BJ (cell line): ENCODE measurements at regions of chr18 and their contacts with region 1.

Region 1: GRCh38 chr18:34122724-34123334 is 101.9 kb downstream of the NOL4 start:
- DNase-seq: no peak
- H3K4me3 ChIP-seq: no peak overlapping the region
- H3K27me3 ChIP-seq: no peaks in the 10 kb centered on the region
- CTCF ChIP-seq: peak; percentile 87

Region 2: GRCh38 chr18:33812186-33812585 is 310.6 kb before region 1 on chr18:
- CTCF ChIA-PET with region 1: no interaction called
- POLR2A ChIA-PET with region 1: no interaction called
- DNase-seq: no peak
- H3K4me3 ChIP-seq: no peak overlapping the region
- H3K27me3 ChIP-seq: no peaks in the 10 kb centered on the region
- CTCF ChIP-seq: no peak

Region 3: DNA sequence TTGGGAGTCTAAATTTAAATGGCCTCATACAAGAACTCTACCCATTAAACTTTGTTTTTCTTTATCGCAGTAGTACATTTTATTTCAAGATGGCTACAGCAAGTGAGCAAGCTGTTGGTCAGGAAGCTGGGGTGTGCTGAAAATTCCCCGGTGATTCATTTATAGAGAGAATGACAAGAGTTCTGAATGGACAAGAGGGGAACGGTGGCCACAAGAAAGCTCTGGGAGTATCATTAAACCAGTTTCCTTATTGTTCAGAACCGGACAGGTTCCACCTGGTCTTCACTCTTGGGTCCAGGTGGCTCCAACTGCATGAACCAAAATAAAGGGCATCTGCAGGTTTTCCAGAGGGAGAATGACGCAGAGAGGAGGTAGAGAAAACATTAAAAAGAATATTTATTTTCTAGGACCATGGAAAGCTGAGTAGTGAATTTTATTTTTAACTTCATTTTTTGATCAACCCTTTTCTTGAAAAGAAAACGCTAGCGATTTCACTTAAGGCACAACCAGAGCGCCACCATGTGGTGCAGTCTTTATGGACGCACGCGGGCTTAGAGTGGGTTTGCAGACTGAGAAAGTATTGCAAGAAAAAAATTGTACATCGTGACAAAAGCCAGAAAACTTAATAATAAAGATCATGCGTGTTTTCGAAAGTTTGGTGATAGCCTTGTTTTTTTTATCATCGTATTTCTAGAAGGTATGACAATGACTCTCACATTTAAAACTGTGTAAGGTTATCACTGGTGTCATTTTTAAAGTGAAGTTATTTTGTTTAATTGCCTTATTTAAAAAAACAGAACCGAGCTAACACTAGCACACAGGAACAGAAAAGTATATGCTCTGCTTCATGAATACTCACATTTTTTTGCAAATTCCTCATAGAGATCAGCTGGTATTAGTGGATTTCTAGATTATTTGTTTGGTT is 199.8 kb after region 1 on chr18:
- CTCF ChIA-PET with region 1: interaction called, 10 read pairs
- POLR2A ChIA-PET with region 1: no interaction called
- DNase-seq: no peak
- H3K4me3 ChIP-seq: no peak overlapping the region
- H3K27me3 ChIP-seq: no peaks in the 10 kb centered on the region
- CTCF ChIP-seq: peak; percentile 38

Region 4: DNA sequence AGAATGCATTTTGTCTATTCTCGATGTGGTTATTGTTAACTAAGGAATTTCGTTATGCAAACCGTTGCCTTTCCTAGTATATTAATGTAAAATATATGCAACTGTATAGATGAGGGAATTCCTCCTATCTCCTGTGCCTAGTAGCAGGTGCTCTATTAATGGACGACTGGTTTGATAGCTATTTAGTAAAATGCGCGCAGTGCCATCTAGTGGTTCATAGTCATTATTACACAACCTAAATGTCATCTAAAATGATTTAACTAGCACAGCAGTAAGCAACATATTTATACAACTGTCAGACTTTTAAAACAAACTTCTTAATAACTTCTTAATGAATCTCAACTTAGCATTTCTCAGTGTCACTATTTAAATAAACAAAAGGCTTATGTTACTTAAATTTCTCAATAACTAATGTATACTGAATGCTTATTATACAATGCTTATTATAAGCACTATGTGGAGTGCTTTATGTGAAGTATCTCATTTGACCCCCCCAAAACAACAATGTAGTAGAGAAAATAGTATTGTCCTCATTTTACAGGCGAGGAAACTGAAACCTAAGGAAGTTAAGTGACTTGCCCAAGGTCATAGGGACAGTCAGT is 665.2 kb after region 1 on chr18:
- CTCF ChIA-PET with region 1: interaction called, 17 read pairs
- POLR2A ChIA-PET with region 1: no interaction called
- DNase-seq: no peak
- H3K4me3 ChIP-seq: no peak overlapping the region
- H3K27me3 ChIP-seq: no peaks in the 10 kb centered on the region
- CTCF ChIP-seq: peak; percentile 55